ENCODE measurements at regions of chr10 and their contacts with region 1.

Region 1: GRCh38 chr10:27661514-27662286 is 83.9 kb downstream of the MKX start:
- DNase-seq: no peak
- H3K4me3 ChIP-seq: no peak overlapping the region
- H3K4me3 Mint-ChIP-seq: no peak overlapping the region
- H3K27ac Mint-ChIP-seq: no peak overlapping the region
- H3K4me1 ChIP-seq: no peaks in the 10 kb centered on the region
- H3K4me1 Mint-ChIP-seq: no peaks in the 10 kb centered on the region
- H3K27me3 ChIP-seq: no peaks in the 10 kb centered on the region; the same call in 1 of the 2 replicates
- H3K27me3 Mint-ChIP-seq: peaks cover 42% of the 10 kb centered on the region
- CTCF ChIP-seq: no peak

Region 2: DNA sequence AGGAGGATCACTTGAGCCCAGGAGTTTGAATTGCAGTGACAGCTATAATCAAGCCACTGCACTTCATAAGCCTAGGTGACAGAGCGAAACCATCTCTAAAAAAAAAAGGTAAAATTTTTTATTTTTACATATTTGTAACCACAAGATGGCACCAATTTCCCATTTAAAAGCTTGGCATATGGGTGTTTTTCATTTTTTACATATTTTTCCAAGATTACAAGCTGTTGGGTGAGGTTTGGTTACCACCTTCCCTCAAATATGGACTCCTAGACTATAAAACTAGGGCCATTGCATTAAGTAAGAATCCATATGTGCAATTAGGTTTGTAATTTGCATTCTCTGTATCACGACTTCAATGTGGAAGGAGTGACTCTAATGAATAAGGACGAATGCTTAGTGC is 291.8 kb before region 1 on chr10:
- CTCF ChIA-PET with region 1: no interaction called
- POLR2A ChIA-PET with region 1: no interaction called
- intact Hi-C with region 1: loop called (anchors 5 kb)
- DNase-seq: no peak
- H3K4me3 ChIP-seq: no peak overlapping the region
- H3K4me3 Mint-ChIP-seq: no peak overlapping the region
- H3K27ac Mint-ChIP-seq: no peak overlapping the region
- H3K4me1 ChIP-seq: no peaks in the 10 kb centered on the region
- H3K4me1 Mint-ChIP-seq: no peaks in the 10 kb centered on the region
- H3K27me3 ChIP-seq: no peaks in the 10 kb centered on the region
- H3K27me3 Mint-ChIP-seq: peaks cover 13% of the 10 kb centered on the region
- CTCF ChIP-seq: peak; percentile 26 to 43